ENCODE measurements at regions of chr5 and their contacts with region 1.

Region 1: GRCh38 chr5:140432916-140433315 is 31.3 kb downstream of the ANKHD1 start:
- DNase-seq: no peak
- ATAC-seq: peak in 2 of 4 donors; percentile 77 to 80
- H3K4me3 ChIP-seq: no peak overlapping the region
- H3K27ac ChIP-seq: peak overlapping the region; percentile 30
- H3K4me1 ChIP-seq: peaks cover 12% of the 10 kb centered on the region
- H3K27me3 ChIP-seq: no peaks in the 10 kb centered on the region
- CTCF ChIP-seq: no peak

Region 2: DNA sequence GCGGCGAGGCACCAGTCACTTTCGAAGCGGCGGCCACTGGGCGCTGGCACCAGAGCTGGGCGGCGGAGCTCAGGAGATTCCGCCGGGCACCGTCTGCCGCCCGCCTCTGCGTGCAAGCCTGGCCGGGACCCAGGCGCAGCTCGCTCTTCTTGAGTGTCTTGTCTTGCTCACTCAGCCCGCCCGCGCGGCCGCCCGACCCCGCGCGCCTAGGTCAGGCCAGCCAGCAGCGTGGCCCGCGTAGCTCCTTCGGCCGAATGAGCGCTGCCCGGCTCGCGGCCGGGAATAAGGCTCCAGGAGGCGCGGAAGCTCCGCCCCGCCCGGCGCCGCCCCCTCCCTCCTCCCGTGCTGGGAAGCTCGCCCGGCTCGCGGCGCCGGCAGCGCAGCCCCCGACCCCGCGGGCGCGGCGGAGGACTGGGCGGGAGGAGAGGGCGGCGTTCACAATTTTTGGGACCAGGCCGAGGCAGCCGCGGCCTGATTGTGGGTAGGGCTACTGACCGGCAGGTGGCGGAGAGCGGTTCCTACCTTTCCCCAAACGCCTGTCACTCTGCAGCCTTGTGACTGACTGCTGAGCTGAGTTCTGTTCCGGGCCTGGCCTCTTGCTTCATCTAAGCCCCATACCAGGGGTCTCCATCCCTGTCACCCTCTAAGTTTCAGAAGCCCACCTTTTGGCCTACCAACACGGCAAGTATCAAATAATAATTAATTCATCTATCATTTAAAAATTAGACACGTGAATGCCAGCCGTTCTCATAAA is 86.4 kb before region 1 on chr5 and contains the start of gene HBEGF:
- intact Hi-C with region 1: no loop called
- DNase-seq: peak; percentile 82 to 89
- ATAC-seq: peak; percentile 69 to 78 (median 72)
- H3K4me3 ChIP-seq: peak within 1 kb of the TSS; percentile 73
- H3K27ac ChIP-seq: peak within 1 kb of the TSS; percentile 94
- H3K4me1 ChIP-seq: peaks cover 67% of the 10 kb centered on the region
- H3K27me3 ChIP-seq: no peaks in the 10 kb centered on the region
- CTCF ChIP-seq: peak; percentile 57
- total RNA-seq, gene HBEGF: 28.9 to 36.7 (median 34.2) TPM

Region 3: GRCh38 chr5:140497897-140498296 is 65.0 kb after region 1 on chr5:
- intact Hi-C with region 1: loop called in 1 of 2 experiments (anchors 10 kb)
- DNase-seq: no peak
- ATAC-seq: no peak
- H3K4me3 ChIP-seq: no peak overlapping the region
- H3K27ac ChIP-seq: no peak overlapping the region
- H3K4me1 ChIP-seq: no peaks in the 10 kb centered on the region
- H3K27me3 ChIP-seq: no peaks in the 10 kb centered on the region
- CTCF ChIP-seq: no peak

Measured in psoas muscle (tissue), 8 donors.